Activated CD8-positive, alpha-beta T cell treated with anti-CD3 and anti-CD28 coated beads for 36 hours (primary cell): ENCODE measurements at regions of chr11 and their contacts with region 1.

Region 1: GRCh38 chr11:117426269-117426685 is 98.6 kb downstream of the CEP164 start:
- DNase-seq: peak; percentile 79
- ATAC-seq: peak; percentile 79
- H3K4me3 Mint-ChIP-seq: no peak overlapping the region
- H3K27ac Mint-ChIP-seq: no peak overlapping the region
- H3K4me1 Mint-ChIP-seq: no peaks in the 10 kb centered on the region
- H3K27me3 Mint-ChIP-seq: peaks cover 2% of the 10 kb centered on the region
- CTCF ChIP-seq: peak; percentile 98

Region 2: DNA sequence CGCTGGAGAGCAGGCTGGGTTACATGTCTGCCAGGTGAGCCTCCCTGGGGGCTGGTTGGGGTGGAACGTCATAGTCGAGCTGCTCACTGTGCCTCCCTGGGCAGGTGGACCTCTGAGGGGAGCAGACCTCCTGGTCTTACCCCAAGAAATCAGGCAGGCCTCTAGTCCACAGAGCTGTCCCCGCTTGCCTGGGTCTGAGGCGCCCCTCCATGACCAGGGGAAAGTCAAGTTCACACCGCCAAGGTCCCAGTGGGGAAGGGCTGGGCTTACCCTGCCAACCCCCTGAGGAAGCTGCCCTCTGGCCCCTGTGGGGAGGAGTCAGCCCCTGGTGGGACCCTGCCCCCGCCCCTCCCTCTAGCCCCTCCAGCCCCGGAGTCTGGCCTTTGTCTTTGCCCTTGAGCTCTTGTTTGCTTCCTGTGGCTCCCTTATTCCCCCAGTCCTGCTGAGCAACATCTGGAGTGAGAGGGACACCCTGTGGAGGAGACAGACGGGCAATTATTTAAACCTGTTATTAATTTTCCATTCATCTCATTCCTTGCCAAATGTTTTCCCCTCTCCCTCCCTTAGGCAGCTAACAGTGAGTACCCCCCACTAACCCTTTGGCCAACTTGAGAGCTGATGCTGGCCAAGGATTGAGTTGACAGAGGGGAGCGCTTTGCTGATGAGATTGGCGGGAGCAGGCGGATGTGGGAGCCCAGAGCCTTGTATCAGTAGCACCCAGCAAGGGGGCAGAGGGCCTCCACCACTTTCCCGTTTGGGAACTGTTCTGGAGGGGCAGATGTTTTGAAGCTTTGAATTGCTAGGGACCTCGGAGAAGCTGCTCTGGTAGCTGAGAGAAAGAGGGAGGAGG is 15.2 kb before region 1 on chr11:
- CTCF ChIA-PET with region 1: interaction called, 56 read pairs
- POLR2A ChIA-PET with region 1: no interaction called
- intact Hi-C with region 1: no loop called
- DNase-seq: no peak
- ATAC-seq: no peak
- H3K4me3 Mint-ChIP-seq: no peak overlapping the region
- H3K27ac Mint-ChIP-seq: no peak overlapping the region
- H3K4me1 Mint-ChIP-seq: no peaks in the 10 kb centered on the region
- H3K27me3 Mint-ChIP-seq: no peaks in the 10 kb centered on the region
- CTCF ChIP-seq: no peak

Region 3: DNA sequence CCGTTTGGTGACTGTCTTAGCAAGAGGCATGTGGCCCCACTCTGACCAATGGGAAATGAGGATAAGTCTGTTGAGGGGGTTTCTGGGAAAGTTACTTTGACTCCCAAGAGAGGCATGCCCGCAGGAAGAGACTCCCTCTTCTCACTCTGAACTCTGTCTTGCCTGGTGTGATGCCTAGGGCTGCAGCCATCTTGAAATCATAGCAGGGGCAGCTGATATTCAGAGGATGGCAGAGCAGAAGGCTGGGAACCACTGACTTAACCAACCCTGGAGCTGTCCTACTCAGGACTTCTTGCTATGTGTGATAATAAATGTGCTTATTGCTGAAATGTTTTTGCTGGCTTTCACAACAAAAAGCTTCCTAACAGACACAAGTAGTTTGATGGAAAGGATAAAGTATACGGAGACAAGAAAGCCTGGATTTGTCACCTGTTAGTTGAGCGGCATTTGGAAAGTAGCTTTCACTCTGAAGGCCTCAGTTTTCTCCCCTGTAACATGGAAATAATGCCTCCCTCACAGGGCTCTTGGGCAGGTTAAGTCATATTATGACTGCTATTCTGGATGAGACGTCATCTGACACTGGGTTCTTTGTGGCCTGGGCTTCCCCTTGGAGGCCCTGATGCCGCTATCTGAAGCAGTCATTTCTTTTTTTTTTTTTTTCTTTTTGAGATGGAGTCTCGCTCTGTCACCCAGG is 29.9 kb after region 1 on chr11:
- CTCF ChIA-PET with region 1: interaction called, 15 read pairs
- POLR2A ChIA-PET with region 1: no interaction called
- intact Hi-C with region 1: no loop called
- DNase-seq: peak; percentile 64
- ATAC-seq: peak; percentile 88
- H3K4me3 Mint-ChIP-seq: no peak overlapping the region
- H3K27ac Mint-ChIP-seq: peak overlapping the region; percentile 26
- H3K4me1 Mint-ChIP-seq: peaks cover 10% of the 10 kb centered on the region
- H3K27me3 Mint-ChIP-seq: peaks cover 2% of the 10 kb centered on the region
- CTCF ChIP-seq: no peak

Region 4: DNA sequence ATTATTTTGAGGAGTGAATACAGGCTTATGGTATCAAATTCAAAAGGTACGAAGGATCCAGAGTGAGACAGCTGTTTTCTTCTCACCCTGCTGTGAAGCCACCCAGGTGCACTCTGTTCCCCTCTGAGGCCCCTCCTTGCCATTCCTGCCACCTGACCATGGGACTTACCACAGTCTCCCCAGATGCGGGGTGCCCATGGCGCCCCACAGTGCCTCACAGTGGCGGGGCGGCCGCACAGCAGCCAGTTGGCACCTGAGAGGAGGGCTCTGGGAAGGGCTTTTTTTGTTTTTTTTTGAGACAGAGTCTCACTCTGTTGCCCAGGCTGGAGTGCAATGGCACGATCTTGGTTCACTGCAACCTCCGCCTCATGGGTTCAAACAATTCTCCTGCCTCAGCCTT is 53.1 kb after region 1 on chr11:
- CTCF ChIA-PET with region 1: interaction called, 17 read pairs
- POLR2A ChIA-PET with region 1: no interaction called
- intact Hi-C with region 1: no loop called
- DNase-seq: peak; percentile 29
- ATAC-seq: no peak
- H3K4me3 Mint-ChIP-seq: no peak overlapping the region
- H3K27ac Mint-ChIP-seq: no peak overlapping the region
- H3K4me1 Mint-ChIP-seq: no peaks in the 10 kb centered on the region
- H3K27me3 Mint-ChIP-seq: no peaks in the 10 kb centered on the region
- CTCF ChIP-seq: peak; percentile 24

Region 5: GRCh38 chr11:117510646-117511045 is 84.4 kb after region 1 on chr11:
- CTCF ChIA-PET with region 1: interaction called, 12 read pairs
- POLR2A ChIA-PET with region 1: no interaction called
- intact Hi-C with region 1: no loop called
- DNase-seq: no peak
- ATAC-seq: no peak
- H3K4me3 Mint-ChIP-seq: no peak overlapping the region
- H3K27ac Mint-ChIP-seq: no peak overlapping the region
- H3K4me1 Mint-ChIP-seq: no peaks in the 10 kb centered on the region
- H3K27me3 Mint-ChIP-seq: no peaks in the 10 kb centered on the region
- CTCF ChIP-seq: no peak

Region 6: DNA sequence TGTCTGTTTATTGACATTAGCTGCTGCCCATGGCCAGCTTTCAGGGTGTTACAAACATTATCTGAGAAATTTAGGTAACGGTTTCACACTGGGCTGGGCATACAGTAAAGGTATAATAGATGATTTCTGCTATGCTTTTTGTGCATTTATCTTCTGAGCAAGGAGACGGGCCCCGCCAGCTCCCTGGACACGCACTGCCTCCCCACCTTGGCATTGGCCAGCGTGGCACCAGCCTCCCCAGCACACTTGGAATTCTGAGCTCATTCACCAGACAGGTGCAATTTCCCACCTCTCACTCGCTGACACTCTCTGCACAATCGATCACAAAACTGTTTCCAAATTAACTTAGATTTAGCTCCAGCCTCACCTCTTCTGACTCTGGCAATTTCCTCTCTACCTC is 124.2 kb after region 1 on chr11:
- CTCF ChIA-PET with region 1: no interaction called
- POLR2A ChIA-PET with region 1: no interaction called
- intact Hi-C with region 1: no loop called
- DNase-seq: no peak
- ATAC-seq: no peak
- H3K4me3 Mint-ChIP-seq: no peak overlapping the region
- H3K27ac Mint-ChIP-seq: no peak overlapping the region
- H3K4me1 Mint-ChIP-seq: no peaks in the 10 kb centered on the region
- H3K27me3 Mint-ChIP-seq: no peaks in the 10 kb centered on the region
- CTCF ChIP-seq: no peak

Region 7: DNA sequence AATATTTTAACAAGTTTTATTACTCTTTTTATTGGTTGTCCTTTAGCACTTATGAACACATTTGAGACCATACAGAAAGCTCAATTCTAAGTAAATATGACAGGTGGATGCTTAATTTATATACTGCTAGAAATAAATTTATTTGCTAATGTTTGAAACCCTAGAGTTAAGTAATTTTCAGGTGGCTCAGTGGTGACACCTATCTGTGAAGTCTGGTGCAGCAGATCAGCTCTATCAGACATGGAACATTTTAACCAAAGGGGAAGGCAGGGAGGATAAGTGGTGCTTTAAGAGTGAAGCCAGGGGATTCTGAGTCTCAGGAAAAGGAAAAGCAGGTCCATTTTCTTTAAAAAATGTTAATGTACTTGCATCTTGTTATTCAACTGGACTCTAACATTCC is 194.9 kb after region 1 on chr11:
- CTCF ChIA-PET with region 1: interaction called, 100 read pairs
- POLR2A ChIA-PET with region 1: no interaction called
- intact Hi-C with region 1: loop called (anchors 5 kb)
- DNase-seq: peak; percentile 45
- ATAC-seq: no peak
- H3K4me3 Mint-ChIP-seq: no peak overlapping the region
- H3K27ac Mint-ChIP-seq: no peak overlapping the region
- H3K4me1 Mint-ChIP-seq: no peaks in the 10 kb centered on the region
- H3K27me3 Mint-ChIP-seq: peaks cover 1% of the 10 kb centered on the region
- CTCF ChIP-seq: peak; percentile 71

Region 8: GRCh38 chr11:117817368-117818040 is 391.2 kb after region 1 on chr11:
- CTCF ChIA-PET with region 1: interaction called, 42 read pairs
- POLR2A ChIA-PET with region 1: no interaction called
- intact Hi-C with region 1: no loop called
- DNase-seq: peak; percentile 94
- ATAC-seq: peak; percentile 53
- H3K4me3 Mint-ChIP-seq: peak overlapping the region; percentile 63
- H3K27ac Mint-ChIP-seq: peak overlapping the region; percentile 98
- H3K4me1 Mint-ChIP-seq: peaks cover 72% of the 10 kb centered on the region
- H3K27me3 Mint-ChIP-seq: no peaks in the 10 kb centered on the region
- CTCF ChIP-seq: peak; percentile 99